ENCODE measurements at regions of chr1 and their contacts with region 1.

Region 1: DNA sequence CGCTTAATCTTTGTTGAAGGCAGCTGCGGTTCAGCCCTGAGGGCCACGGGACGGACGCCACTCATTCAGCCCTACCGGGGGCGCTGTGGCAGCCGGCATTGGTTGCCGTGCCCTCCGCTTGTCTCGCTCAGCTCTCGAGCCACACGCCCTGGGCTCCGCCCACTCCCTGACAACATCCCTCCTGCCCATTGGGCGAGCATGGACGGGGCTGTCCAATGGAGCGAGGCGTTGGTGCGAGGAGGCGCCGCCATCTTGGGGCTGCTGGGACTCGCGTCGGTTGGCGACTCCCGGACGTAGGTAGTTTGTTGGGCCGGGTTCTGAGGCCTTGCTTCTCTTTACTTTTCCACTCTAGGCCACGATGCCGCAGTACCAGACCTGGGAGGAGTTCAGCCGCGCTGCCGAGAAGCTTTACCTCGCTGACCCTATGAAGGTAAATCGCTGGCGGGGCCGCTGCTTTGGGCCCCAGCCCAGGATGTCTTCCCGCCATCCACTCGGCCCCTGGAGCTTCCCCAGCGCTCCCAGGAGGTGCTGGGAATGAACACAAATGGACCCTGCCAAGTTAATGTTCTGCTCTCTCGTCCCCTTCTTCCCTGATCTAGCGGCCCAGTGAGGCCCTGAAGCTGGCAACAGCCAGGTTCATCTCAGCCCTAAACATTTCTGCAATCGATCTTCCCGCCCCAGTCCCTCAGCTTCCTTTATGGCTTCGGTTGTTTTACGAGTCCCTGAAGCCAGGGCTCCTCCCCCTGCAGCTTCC is at the start of gene SRP9:
- DNase-seq: peak; percentile 99
- H3K4me3 Mint-ChIP-seq: no peak within 1 kb of the TSS
- H3K27ac Mint-ChIP-seq: no peak within 1 kb of the TSS
- H3K4me1 Mint-ChIP-seq: peaks cover 29% of the 10 kb centered on the region
- H3K27me3 Mint-ChIP-seq: no peaks in the 10 kb centered on the region
- total RNA-seq, gene SRP9: 230 and 233 TPM in 2 replicates

Region 2: DNA sequence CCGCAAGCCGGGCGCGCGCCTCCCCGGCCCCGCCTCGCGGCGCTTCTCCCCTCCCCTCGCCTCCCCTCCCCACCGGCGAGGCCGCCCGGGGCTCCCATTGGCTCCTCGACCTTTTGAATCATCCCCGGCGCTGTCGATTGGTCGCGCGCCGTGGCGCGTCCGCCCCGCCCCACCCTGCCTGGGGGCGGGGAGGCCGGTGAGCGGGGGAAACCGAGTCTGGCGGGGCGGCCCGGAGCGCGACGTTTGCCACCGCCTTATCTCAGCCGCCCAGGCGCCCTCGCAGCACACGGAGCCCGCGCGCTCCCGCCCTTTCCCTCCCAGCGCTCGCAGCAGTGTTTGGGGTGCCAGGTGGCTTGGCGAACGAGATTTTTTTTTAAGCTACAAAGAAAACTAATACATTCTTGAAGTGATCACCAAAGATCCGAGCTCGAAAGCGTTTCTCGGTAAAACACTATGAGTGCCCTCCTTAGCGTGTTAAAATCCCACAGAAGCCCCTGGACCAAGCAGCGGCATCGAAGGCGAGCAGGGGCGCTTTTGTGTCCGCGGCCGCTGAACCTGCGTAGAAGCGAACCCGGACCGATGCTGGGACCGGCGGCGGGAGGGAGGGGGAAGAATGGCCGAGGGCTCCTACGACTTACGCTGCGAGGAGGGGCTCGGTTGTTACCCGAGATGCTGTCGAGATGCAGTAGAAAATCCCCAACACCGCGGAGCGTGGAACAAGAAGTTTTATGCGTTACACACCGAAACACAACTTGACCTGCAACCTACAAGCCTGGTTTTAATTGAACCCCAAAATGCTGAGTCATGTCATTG is 349.5 kb before region 1 on chr1:
- intact Hi-C with region 1: loop called (anchors 1 kb)
- DNase-seq: peak; percentile 94
- H3K4me3 Mint-ChIP-seq: peak overlapping the region; percentile 83
- H3K27ac Mint-ChIP-seq: peak overlapping the region; percentile 90
- H3K4me1 Mint-ChIP-seq: peaks cover 56% of the 10 kb centered on the region
- H3K27me3 Mint-ChIP-seq: no peaks in the 10 kb centered on the region

Region 3: GRCh38 chr1:225809842-225810578 is 32.2 kb after region 1 on chr1 and contains the start of gene EPHX1:
- intact Hi-C with region 1: loop called (anchors 1 kb)
- DNase-seq: peak; percentile 67
- H3K4me3 Mint-ChIP-seq: peak within 1 kb of the TSS; percentile 87
- H3K27ac Mint-ChIP-seq: no peak within 1 kb of the TSS
- H3K4me1 Mint-ChIP-seq: peaks cover 7% of the 10 kb centered on the region
- H3K27me3 Mint-ChIP-seq: peaks cover 22% of the 10 kb centered on the region
- total RNA-seq, gene EPHX1: 1.0 and 1.6 TPM in 2 replicates

Region 4: GRCh38 chr1:225896937-225897549 is 119.3 kb after region 1 on chr1:
- intact Hi-C with region 1: loop called (anchors 1 kb)
- DNase-seq: peak; percentile 81
- H3K4me3 Mint-ChIP-seq: peak overlapping the region; percentile 44
- H3K27ac Mint-ChIP-seq: peak overlapping the region; percentile 64
- H3K4me1 Mint-ChIP-seq: peaks cover 47% of the 10 kb centered on the region
- H3K27me3 Mint-ChIP-seq: peaks cover 42% of the 10 kb centered on the region

Region 5: DNA sequence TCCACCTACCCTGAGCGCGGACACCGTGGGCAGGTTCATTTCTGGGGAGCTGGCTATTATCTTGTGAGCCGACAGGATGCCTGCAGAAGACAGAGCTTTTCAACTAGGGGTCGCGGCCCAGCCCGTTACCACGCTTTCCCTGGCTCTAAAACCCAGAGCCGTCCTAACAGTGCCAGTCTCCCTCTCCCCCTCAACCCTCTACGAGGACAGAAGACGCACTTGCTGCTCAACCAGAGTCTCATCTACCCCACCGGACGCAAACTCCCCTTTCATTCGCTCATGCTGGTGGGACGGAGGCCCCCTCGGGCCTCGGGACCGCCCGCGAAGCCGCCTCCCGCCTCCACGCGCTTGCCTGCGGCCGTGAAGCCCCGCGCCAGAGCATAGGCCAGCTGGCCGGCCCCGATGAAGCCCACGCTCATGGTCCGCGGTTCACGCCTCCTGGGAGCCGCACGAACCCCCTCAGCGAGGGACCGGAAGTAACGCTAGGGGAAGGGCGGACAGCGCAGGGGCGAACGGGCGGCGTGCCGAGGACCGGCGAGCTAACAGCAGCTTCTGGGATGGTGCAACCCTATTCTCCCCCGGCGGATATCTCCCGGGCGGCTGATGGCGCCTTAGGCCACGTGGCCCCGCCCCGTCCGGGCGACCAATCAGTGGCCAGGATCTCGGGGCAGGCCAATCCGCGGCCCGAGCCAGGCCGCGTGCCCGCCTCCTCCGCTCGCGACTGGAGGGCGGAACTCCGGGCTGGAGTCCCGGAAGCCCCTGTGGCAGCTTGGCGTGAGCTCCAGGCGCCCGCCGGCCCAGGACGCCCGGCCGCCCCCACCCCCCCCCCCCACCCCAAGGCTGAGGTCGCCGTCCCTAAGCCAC is 146.2 kb after region 1 on chr1 and contains the start of gene PYCR2:
- intact Hi-C with region 1: loop called (anchors 1 kb)
- DNase-seq: peak; percentile 95
- H3K4me3 Mint-ChIP-seq: peak within 1 kb of the TSS; percentile 94
- H3K27ac Mint-ChIP-seq: peak within 1 kb of the TSS; percentile 91
- H3K4me1 Mint-ChIP-seq: peaks cover 43% of the 10 kb centered on the region
- H3K27me3 Mint-ChIP-seq: no peaks in the 10 kb centered on the region
- total RNA-seq, gene PYCR2: 137 and 145 TPM in 2 replicates

Region 6: DNA sequence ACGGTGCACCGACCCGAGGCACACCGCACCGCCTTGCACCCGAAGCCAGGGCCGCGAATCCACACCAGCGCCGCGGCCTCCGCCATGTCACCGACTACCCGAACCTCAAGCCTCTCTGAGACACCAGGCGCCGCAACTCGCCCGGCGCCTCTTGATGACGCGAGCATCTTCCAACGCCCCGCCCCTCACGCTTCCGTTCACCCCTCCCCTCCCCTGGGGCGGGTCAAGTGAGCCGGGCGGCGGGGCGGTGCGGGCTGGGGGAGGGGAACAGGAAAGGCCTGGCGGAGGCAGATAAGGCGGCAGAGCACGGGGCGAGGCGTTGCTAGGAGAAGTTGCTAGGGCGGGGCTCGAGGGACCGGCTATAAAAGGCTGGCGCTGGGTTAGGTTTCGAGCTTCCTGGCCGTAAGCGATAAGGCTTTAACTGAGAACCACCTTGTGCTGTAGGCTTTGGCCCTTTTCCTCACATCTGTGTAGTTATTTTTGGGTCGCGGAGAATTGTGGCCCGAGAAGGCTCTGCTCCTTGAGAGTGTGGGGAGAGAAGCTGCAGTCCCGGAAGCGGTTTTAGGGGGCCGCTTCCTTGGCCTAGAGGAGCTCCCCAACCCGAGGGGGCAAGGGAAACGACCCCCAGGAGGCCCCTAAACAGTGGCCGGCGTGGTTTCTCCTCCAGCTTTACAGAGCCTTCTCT is 221.6 kb after region 1 on chr1 and contains the start of gene SDE2:
- intact Hi-C with region 1: loop called (anchors 1 kb)
- DNase-seq: peak; percentile 99
- H3K4me3 Mint-ChIP-seq: peak within 1 kb of the TSS; percentile 100
- H3K27ac Mint-ChIP-seq: peak within 1 kb of the TSS; percentile 100
- H3K4me1 Mint-ChIP-seq: peaks cover 76% of the 10 kb centered on the region
- H3K27me3 Mint-ChIP-seq: no peaks in the 10 kb centered on the region
- total RNA-seq, gene SDE2: 28.2 and 28.4 TPM in 2 replicates